Mammary epithelial cell (primary cell): ENCODE measurements at regions of chr7 and their contacts with region 1.

Region 1: DNA sequence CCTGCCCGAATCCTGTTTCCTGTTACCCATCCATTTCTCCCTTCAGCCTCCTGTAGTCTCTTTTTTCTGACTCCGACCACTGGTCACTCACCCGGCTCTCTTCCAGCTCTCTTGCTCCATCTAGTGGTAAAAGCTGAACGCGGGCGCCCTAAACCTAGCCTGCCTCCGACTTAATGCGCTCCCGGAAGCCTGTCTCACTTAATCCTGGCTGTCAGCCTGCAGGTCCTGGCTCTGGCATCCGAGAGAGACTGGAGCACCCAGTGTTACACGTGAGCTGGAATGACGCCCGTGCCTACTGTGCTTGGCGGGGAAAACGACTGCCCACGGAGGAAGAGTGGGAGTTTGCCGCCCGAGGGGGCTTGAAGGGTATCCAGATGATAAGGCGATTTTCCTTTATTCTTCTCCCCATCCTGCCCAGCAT is 10.3 kb downstream of the SUMF2 start:
- DNase-seq: peak; percentile 74
- H3K4me3 ChIP-seq: no peak overlapping the region
- H3K27ac ChIP-seq: no peak overlapping the region
- H3K4me1 ChIP-seq: peaks cover 3% of the 10 kb centered on the region
- H3K27me3 ChIP-seq: no peaks in the 10 kb centered on the region
- CTCF ChIP-seq: peak; percentile 84 to 94

Region 2: DNA sequence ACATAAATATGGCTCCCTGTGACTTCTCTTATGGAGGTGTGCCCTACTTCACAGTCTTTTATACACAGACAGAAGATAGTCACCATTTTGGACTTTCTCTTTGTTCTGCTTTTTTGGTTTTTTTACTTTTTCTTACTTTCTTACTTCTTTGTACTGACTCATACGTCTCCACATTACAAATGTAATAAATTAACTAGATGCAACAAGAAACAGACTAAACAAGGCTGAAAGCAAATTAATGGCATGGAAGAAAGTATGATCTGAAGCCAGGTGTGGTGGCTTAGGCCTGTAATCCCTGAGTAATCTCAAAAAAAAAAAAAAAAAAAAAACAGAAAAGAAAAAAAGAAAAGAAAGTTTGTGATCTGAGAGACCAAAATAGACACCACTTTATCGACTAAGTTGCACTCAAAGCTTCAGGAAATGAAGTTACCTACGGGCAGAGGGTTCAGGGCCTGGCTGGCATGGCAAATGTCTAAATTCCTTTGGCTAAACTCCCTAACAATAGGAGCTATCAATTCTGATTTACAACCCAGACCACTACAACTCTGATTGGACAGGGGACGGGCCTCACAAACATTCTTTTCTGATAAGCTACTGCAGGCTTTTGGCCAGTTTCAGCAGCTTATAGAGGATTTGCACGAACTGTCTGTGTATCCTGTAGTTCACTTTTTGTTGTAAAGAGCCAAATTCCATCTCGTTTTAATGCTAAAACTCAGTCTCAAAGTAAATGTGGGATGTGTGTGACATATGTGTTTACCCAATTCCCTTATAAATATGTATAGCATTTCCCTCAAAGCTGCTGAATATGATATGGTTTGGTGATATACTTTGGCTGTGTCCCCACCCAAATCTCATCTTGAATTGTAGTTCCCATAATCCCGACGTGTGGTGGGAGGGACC is 340.9 kb before region 1 on chr7:
- CTCF ChIA-PET with region 1: no interaction called
- dilution Hi-C with region 1: no loop called
- in situ Hi-C with region 1: no loop called
- intact Hi-C with region 1: loop called (anchors 5 kb)
- DNase-seq: no peak
- H3K4me3 ChIP-seq: no peak overlapping the region
- H3K27ac ChIP-seq: no peak overlapping the region
- H3K4me1 ChIP-seq: no peaks in the 10 kb centered on the region
- H3K27me3 ChIP-seq: no peaks in the 10 kb centered on the region
- CTCF ChIP-seq: no peak

Region 3: DNA sequence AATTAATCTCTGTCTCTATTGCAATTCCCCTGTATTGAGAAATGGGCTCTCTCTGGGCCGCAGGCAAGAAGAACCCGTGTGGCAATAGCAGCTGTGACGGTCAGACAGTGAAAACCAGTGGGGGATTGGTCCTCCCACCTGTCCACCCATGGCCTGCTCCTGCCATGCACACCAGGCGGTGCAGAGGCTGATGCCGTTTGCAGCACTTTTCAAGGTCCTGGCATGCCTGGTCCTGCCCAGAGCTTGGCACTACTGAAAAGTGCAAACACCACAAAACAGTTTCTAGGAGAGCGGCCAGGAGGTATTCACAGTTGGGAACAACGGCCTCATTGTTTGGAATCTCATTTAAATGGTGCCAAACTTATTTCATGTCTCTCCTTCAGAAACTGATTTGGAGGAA is 64.7 kb before region 1 on chr7:
- CTCF ChIA-PET with region 1: interaction called, 9 read pairs
- dilution Hi-C with region 1: no loop called
- in situ Hi-C with region 1: no loop called
- intact Hi-C with region 1: loop called (anchors 1 kb)
- DNase-seq: peak; percentile 95
- H3K4me3 ChIP-seq: no peak overlapping the region
- H3K27ac ChIP-seq: peak overlapping the region; percentile 86
- H3K4me1 ChIP-seq: peaks cover 24% of the 10 kb centered on the region
- H3K27me3 ChIP-seq: no peaks in the 10 kb centered on the region
- CTCF ChIP-seq: peak in 1 of 2 donors; percentile 20